PC-9 (cell line): ENCODE measurements at regions of chr11 and their contacts with region 1.

Region 1: DNA sequence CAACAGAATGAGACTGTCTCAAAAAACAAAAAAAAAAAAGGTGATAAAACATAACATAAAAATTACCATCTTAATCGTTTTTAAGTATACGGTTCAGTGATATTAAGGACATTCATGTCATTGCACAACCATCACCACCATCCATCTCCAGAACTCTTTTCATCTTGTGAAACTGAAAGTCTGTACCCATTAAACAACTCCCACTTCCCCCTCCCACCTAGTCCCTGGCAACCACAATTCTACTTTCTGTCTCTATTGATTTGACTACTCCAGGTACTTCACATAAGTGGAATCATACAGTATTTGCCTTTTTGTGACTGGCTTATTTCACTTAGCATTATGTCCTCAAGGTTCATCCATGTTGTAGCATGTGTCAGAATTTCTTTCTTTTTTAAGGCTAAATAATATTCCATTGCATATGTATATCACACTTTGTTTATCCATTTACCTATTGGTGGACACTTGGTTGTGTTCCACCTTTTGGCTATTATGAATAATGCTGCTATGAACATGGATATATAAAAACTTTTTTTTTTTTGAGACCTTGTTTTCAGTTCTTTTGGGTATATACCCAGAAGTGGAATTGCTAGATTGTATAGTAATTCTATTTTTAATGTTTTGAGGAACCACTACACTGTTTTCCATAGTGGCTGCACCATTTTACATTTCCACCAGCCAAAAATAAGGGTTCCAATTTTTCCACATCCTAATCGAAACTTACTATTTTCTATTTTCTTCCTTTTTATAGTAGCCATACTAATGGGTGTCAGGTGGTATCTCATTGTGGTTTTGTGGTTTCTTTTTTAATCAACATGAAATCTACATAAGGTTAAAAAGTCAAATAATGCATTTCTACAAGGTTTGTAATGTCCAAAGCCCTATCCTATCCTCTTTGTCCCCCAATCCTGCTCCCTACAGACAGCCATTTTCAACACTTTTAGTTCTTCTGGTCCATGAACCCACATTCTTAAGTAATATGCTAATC is 23.4 kb upstream of the PIK3C2A start:
- DNase-seq: no peak
- H3K4me3 ChIP-seq: no peak overlapping the region
- H3K27ac ChIP-seq: no peak overlapping the region
- H3K4me1 ChIP-seq: no peaks in the 10 kb centered on the region
- H3K27me3 ChIP-seq: no peaks in the 10 kb centered on the region
- CTCF ChIP-seq: no peak

Region 2: DNA sequence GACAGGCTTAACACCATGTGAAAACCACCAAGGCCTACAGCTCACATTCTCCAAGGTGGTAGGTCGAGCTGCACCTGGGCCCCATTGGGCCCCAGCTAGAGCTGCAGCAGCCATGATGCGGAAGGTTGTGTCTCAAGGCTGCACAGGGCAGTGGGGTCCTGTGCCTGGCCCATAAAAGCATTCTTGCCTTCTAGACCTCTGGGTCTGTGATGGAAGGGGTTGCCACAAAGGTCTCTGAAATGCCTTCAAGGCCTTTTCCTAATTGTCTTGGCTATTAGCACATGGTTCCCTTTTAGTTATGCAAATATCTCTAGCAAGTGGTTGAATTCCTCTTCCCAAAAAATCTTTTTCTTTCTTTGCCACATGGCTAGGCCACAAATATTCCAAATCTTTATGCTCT is 545.2 kb before region 1 on chr11:
- CTCF ChIA-PET with region 1: no interaction called
- POLR2A ChIA-PET with region 1: no interaction called
- intact Hi-C with region 1: no loop called
- DNase-seq: no peak
- H3K4me3 ChIP-seq: no peak overlapping the region
- H3K27ac ChIP-seq: no peak overlapping the region
- H3K4me1 ChIP-seq: no peaks in the 10 kb centered on the region
- H3K27me3 ChIP-seq: no peaks in the 10 kb centered on the region
- CTCF ChIP-seq: no peak

Region 3: GRCh38 chr11:17354601-17354991 is 123.4 kb after region 1 on chr11:
- CTCF ChIA-PET with region 1: no interaction called
- POLR2A ChIA-PET with region 1: no interaction called
- intact Hi-C with region 1: loop called (anchors 5 kb)
- DNase-seq: peak; percentile 53 to 74
- H3K4me3 ChIP-seq: peak overlapping the region; percentile 72; the same call in 1 of the 2 replicates
- H3K27ac ChIP-seq: no peak overlapping the region
- H3K4me1 ChIP-seq: 0 out of 2 replicates have a peak, but pooled peaks cover 4% of the 10 kb centered on the region
- H3K27me3 ChIP-seq: no peaks in the 10 kb centered on the region
- CTCF ChIP-seq: peak; percentile 74

Region 4: DNA sequence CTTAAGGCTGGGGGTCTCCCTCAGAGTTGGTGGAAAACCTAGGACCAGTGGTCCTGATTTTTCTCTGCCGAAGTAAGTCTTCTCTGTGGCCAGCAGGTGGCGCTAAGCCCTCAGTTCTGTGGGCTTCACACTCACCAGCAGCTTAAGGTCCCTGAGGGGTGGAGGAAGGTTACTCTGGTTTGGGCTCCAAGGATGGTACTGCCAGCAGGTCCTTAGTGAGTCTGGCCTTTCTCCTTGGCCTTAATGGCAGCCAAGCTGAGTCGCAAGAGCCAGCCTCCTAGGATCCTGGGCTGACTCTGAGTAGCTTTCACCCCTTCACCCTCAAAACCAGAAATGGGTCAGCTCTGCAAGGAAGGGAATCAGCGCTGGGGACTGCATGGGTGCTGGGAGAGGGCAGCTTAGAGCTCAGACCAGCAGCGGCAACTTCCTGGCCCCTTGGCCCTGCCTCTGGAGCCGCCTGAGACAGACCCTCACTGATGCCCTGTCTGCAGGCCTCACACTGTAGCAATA is 152.9 kb after region 1 on chr11:
- CTCF ChIA-PET with region 1: interaction called, 4 read pairs
- POLR2A ChIA-PET with region 1: no interaction called
- intact Hi-C with region 1: loop called (anchors 2 kb)
- DNase-seq: peak; percentile 54 to 60
- H3K4me3 ChIP-seq: no peak overlapping the region
- H3K27ac ChIP-seq: no peak overlapping the region
- H3K4me1 ChIP-seq: no peaks in the 10 kb centered on the region
- H3K27me3 ChIP-seq: no peaks in the 10 kb centered on the region
- CTCF ChIP-seq: peak; percentile 95

Region 5: DNA sequence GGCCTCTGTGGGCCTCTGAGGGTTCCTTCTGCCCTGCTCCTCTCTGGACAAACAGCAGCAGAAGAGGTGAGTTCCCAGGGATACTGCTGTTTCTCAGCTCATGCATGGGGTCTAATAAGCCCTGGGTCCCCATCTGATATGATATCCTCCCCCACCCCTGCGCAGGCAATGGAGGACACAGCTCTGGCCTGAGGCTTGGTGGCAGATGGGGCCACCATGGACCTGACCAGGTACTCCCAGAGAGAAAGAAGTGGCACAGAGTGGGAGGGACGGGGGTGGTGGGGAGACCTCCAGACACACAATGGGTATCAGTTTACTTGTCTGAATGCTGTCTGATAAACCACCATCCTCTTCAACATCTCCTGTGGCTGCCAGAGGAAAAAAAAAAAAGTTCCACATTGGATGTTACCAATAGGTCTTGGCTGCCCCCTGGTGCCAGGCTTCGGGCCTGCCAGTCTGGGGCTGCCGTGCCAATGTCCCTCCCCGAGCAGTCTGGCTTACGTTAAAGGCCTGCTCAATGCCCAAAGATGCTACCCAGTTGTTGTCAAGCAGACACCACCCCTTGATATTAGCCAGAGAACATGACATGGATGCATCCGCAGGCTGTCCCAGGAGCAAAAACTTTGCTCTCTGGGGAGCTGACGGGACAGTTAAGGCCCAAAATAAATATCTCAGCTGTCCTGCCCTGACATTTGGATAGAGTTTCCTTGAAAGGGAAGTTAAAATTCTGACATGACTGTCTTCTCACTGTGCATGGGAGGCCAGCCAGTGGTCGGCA is 273.4 kb after region 1 on chr11:
- CTCF ChIA-PET with region 1: no interaction called
- POLR2A ChIA-PET with region 1: no interaction called
- intact Hi-C with region 1: loop called (anchors 1 kb)
- DNase-seq: peak; percentile 53 to 79
- H3K4me3 ChIP-seq: no peak overlapping the region
- H3K27ac ChIP-seq: no peak overlapping the region
- H3K4me1 ChIP-seq: no peaks in the 10 kb centered on the region
- H3K27me3 ChIP-seq: peaks cover 58% of the 10 kb centered on the region
- CTCF ChIP-seq: peak; percentile 92

Region 6: DNA sequence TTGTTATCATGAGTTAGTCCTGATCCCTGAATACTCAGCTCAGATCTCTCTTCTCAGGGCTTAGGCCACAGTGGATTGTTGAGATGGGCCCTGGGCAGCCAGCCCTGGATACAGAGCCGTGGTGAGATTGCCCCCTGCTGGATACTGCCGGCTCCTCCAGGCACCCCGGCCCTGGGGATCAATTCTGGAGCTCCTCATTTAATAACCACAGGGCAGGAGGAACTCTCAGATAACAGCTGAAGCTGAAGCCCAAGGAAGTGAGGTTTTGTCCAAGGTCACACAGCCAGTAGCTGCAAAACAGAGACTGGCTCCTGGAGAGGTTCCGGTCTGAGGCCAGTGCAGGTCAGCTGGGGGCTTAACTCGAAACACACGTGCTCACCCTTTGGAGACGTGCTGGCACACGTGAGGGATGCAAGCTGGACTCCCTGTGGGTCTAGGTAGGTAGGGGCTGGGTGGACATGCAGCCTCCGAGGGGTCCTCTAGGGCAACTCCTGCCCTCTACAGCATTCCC is 297.1 kb after region 1 on chr11:
- CTCF ChIA-PET with region 1: no interaction called
- POLR2A ChIA-PET with region 1: no interaction called
- intact Hi-C with region 1: loop called (anchors 1 kb)
- DNase-seq: peak in 1 of 2 experiments; percentile 51
- H3K4me3 ChIP-seq: no peak overlapping the region
- H3K27ac ChIP-seq: no peak overlapping the region
- H3K4me1 ChIP-seq: no peaks in the 10 kb centered on the region
- H3K27me3 ChIP-seq: peaks cover 85% of the 10 kb centered on the region
- CTCF ChIP-seq: peak; percentile 81